ENCODE measurements at regions of chr12 and their contacts with region 1.

Region 1: DNA sequence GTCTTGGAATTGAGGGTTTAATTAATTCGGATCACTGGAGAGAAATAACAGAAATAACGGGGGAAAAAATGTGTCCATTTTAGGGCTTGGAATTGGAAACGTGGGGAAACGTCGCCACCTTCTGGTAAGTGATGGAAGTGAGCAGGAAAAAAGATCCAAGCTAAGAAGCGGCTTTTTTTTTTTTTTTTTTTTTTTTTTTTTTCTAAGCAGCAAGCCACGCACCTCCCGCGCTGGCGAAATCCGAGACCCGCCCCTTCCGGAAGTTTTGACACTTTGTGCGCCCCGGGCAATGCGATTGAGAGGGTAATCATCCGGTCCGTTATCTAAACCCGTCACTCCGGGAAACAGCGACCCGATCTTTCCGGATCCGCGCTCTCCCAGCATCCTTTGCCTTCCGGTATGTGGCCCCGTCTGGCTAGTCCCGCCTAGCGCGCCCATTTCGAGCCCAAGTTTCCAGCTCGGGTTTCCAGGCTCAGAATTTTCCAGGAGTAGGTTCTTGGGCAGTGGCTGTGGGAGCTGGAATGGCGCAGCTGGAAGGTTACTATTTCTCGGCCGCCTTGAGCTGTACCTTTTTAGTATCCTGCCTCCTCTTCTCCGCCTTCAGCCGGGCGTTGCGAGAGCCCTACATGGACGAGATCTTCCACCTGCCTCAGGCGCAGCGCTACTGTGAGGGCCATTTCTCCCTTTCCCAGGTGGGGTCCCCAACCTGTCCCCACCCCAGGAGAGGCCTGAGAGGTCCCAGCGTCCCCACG is at the start of gene ALG10:
- DNase-seq: peak; percentile 96
- H3K4me3 ChIP-seq: peak within 1 kb of the TSS; percentile 40 to 83 (median 72)
- H3K27ac ChIP-seq: peak within 1 kb of the TSS; percentile 87
- H3K4me1 ChIP-seq: peaks cover 7% of the 10 kb centered on the region
- H3K27me3 ChIP-seq: peaks cover 0 to 3% of the 10 kb centered on the region in 2 experiments
- CTCF ChIP-seq: peak; percentile 54 to 63
- POLR2A ChIP-seq: peak; percentile 80
- total RNA-seq, gene ALG10: 13.0 and 13.2 TPM in 2 replicates

Region 2: DNA sequence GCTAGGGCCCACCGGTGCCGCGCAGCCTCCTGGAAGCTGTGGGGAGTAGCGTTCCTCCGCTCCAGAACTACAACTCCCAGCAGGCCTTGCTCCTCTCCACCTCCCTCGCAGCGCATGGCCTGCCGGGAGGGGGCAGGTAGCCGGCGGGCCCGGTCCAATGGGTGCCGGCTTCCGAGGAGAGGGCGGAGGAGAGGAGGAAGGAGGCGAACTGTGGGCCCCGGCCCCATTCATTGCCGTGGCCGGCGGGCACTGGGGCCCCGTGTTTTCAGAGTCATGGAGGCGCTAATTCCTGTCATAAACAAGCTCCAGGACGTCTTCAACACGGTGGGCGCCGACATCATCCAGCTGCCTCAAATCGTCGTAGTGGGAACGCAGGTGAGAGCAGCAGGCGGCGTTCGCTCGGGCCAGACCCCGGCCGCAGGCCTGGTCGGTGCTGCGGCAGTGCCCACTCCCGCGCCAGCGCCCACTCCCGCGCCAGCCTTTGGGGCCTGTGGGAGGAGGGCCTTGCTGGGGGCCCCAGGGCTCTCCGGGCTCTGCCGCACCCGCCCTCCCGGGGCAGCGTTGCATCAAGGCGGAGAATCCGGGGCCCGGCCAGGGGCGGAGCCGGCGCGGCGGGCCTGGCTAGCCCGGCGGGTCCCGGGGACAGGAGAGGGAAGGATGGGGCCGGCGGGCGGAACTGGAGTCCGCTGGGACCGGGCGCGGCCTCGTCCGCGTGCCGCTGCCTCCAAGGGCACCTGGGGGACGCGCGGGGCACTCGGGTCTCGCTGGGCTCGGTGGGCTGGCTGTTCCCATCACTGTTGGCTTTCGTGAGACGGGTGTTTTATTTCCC is 1343.0 kb before region 1 on chr12 and contains the start of gene DNM1L:
- CTCF ChIA-PET with region 1: interaction called, 3 read pairs
- POLR2A ChIA-PET with region 1: no interaction called
- dilution Hi-C with region 1: no loop called
- intact Hi-C with region 1: loop called (anchors 2 kb)
- DNase-seq: peak; percentile 96
- H3K4me3 ChIP-seq: peak within 1 kb of the TSS; percentile 30 to 91 (median 74)
- H3K27ac ChIP-seq: peak within 1 kb of the TSS; percentile 29
- H3K4me1 ChIP-seq: peaks cover 11% of the 10 kb centered on the region
- H3K27me3 ChIP-seq: no peaks in the 10 kb centered on the region
- CTCF ChIP-seq: peak in 1 of 2 donors; percentile 21
- POLR2A ChIP-seq: peak; percentile 91
- total RNA-seq, gene DNM1L: 90.1 and 103 TPM in 2 replicates

Region 3: DNA sequence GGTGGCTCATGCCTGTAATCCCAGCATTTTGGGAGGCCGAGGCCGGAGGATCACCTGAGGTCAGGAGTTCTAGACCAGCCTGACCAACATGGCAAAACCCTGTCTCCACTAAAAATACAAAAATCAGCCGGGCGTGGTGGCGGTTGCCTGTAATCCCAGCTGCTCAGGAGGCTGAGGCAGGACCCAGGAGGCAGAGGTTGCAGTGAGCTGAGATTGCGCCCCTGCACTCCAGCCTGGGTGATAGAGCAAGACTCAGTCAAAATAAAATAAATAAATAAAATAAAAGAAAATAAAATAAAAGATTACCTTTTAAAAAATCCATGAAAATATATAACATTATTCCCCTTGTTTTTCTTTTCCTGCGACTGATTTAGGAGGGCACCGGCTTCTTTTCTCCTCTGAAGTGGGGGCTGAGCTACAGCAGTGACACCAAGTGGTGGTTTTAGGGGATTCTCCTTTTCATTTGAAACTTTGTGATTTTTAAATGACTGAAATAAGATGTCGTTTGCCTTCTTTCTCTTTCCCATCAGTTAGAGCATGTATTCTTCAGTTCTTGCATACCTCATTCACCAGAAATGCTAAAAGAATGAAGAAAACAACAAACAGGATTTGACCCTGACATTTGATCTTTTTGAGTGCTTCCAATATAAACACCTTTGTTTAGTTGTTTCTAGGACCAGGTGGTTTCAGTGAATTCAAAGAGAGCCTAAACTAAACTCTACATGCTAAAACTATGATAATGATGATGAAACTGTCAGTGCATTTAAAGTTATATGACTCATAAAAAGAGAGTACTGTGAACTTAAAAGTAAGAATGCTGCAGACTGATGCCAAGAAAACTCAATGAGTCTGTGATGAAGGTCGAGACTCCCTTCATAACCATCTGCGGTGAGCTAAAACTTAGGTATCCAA is 1103.1 kb before region 1 on chr12:
- CTCF ChIA-PET with region 1: interaction called, 3 read pairs
- POLR2A ChIA-PET with region 1: no interaction called
- dilution Hi-C with region 1: no loop called
- intact Hi-C with region 1: loop called (anchors 1 kb)
- DNase-seq: peak; percentile 54
- H3K4me3 ChIP-seq: no peak overlapping the region
- H3K27ac ChIP-seq: peak overlapping the region; percentile 63
- H3K4me1 ChIP-seq: peaks cover 23% of the 10 kb centered on the region
- H3K27me3 ChIP-seq: no peaks in the 10 kb centered on the region
- CTCF ChIP-seq: peak; percentile 37 to 39
- POLR2A ChIP-seq: no peak

Region 4: GRCh38 chr12:32947206-32948067 is 1074.8 kb before region 1 on chr12:
- CTCF ChIA-PET with region 1: interaction called, 7 read pairs
- POLR2A ChIA-PET with region 1: no interaction called
- dilution Hi-C with region 1: no loop called
- intact Hi-C with region 1: loop called (anchors 5 kb)
- DNase-seq: no peak
- H3K4me3 ChIP-seq: no peak overlapping the region
- H3K27ac ChIP-seq: no peak overlapping the region
- H3K4me1 ChIP-seq: no peaks in the 10 kb centered on the region
- H3K27me3 ChIP-seq: no peaks in the 10 kb centered on the region
- CTCF ChIP-seq: no peak
- POLR2A ChIP-seq: no peak

Region 5: DNA sequence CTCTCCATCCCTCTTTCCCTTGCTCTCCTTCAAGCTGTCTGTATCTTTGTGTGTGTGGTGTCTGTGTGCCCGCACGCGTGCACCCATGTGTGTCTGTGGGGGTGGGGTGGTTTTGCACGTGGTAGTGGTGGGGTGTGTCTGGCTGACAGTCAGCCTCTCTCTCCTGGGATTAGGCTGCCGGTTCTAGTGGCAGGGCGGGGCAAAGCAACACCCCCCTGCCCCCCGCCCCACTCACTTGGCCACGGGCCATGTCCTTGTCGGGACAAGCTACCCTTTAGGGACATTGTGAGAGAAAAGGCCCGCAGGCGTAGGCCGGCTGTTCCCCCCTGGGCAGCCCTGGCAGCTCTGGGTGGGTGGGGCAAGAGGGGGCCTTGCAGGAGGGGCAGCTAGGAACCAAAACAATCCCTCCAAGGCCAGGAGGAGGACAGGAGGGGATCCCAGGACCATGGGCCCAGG is 182.6 kb after region 1 on chr12:
- CTCF ChIA-PET with region 1: no interaction called
- POLR2A ChIA-PET with region 1: no interaction called
- dilution Hi-C with region 1: no loop called
- intact Hi-C with region 1: no loop called
- DNase-seq: no peak
- H3K4me3 ChIP-seq: no peak overlapping the region
- H3K27ac ChIP-seq: no peak overlapping the region
- H3K4me1 ChIP-seq: no peaks in the 10 kb centered on the region
- H3K27me3 ChIP-seq: no peaks in the 10 kb centered on the region
- CTCF ChIP-seq: no peak
- POLR2A ChIP-seq: no peak

Measured in endothelial cell of umbilical vein (primary cell).